Colonic mucosa (tissue), 4 donors: ENCODE measurements at regions of chr3 and their contacts with region 1.

Region 1: DNA sequence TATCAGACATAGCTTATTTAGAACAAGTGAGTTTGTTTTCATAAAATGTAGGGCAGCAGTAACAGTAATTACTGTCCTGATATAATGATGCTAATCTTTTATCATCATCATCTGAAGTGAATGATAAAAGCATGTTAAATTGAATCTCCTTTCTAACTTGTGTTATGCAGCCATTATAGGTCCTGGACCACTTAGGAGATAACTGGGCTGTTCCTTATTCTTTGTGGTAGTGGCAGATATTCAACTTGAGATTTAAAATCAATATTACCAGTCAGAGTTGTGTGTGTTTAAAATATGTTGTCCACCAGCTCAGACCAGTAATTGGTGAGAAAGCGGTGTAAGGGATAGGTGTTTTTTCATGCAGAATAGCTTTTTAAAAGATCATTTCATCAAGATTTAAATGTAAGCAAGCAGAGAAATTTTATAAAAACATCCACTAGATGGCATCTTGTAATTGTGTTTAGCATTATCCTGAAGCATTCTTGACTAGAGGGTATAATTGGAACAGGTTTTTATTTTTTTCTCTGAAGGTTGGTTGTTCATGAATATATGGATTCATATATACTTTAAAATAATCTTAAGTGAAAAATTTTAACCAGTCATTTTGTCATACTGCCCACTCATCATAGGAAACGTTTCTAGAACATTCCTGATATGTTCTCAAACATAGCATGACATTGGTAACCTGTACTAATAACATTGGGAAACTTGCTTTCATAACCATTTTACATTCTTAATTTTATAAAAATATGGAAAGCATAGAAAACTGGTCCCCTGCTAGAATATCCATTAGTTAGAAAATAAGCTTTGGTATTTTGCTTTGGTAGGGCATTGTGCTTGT is 153.9 kb downstream of the BBX start:
- DNase-seq: no peak
- H3K4me3 ChIP-seq: no peak overlapping the region
- H3K27ac ChIP-seq: no peak overlapping the region
- H3K4me1 ChIP-seq: no peaks in the 10 kb centered on the region
- H3K27me3 ChIP-seq: no peaks in the 10 kb centered on the region
- CTCF ChIP-seq: peak; percentile 50

Region 2: GRCh38 chr3:107690522-107691138 is 13.9 kb after region 1 on chr3:
- intact Hi-C with region 1: no loop called
- DNase-seq: no peak
- H3K4me3 ChIP-seq: no peak overlapping the region
- H3K27ac ChIP-seq: no peak overlapping the region
- H3K4me1 ChIP-seq: no peaks in the 10 kb centered on the region
- H3K27me3 ChIP-seq: no peaks in the 10 kb centered on the region
- CTCF ChIP-seq: peak; percentile 34

Region 3: GRCh38 chr3:107740992-107741896 is 64.6 kb after region 1 on chr3:
- intact Hi-C with region 1: loop called (anchors 5 kb)
- DNase-seq: no peak
- H3K4me3 ChIP-seq: no peak overlapping the region
- H3K27ac ChIP-seq: no peak overlapping the region
- H3K4me1 ChIP-seq: no peaks in the 10 kb centered on the region
- H3K27me3 ChIP-seq: no peaks in the 10 kb centered on the region
- CTCF ChIP-seq: peak; percentile 56

Region 4: DNA sequence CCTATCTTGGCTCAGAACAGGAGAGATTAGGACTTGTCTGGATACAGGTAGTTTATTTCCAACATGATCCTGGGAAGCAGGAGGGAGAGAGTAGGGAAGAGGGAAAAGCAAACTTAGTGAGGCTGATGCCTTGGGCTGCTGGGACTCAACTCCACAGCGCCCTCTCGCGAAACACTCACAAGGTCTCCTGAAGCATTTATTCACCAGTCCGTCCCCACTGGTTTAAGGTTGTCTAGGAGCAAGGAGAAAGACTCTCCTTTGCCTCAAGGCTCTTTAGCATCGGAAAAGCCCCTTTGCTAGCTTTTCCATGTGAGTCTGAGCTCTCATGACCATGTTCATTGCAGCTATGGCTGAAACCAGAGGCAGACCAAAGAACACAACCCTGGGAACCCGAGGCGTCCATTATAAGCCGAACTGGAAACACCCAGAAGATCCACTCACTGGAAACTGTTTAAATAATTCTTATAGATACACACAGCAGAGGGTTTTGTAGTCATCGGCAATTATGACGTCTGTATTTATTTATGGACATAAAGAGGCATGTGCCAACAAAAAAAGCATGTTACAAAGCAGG is 169.7 kb after region 1 on chr3:
- intact Hi-C with region 1: loop called (anchors 5 kb)
- DNase-seq: peak; percentile 64
- H3K4me3 ChIP-seq: no peak overlapping the region
- H3K27ac ChIP-seq: no peak overlapping the region
- H3K4me1 ChIP-seq: no peaks in the 10 kb centered on the region
- H3K27me3 ChIP-seq: no peaks in the 10 kb centered on the region
- CTCF ChIP-seq: peak; percentile 46